Gastrocnemius medialis (tissue), 4 donors: ENCODE measurements at regions of chr15 and their contacts with region 1.

Region 1: GRCh38 chr15:50876989-50877360 is 31.5 kb upstream of the AP4E1 start:
- DNase-seq: peak; percentile 49 to 66
- ATAC-seq: peak; percentile 87 to 91
- H3K4me3 ChIP-seq: peak overlapping the region; percentile 44 to 53 (median 46)
- H3K27ac ChIP-seq: peak overlapping the region; percentile 60 to 74 (median 66)
- H3K4me1 ChIP-seq: peaks cover 0 to 4% of the 10 kb centered on the region in 2 donors
- H3K27me3 ChIP-seq: no peaks in the 10 kb centered on the region
- CTCF ChIP-seq: peak; percentile 90 to 97 (median 96)
- POLR2A ChIP-seq: no peak

Region 2: GRCh38 chr15:50675536-50676144 is 201.3 kb before region 1 on chr15:
- in situ Hi-C with region 1: loop called in 2 of 4 experiments (anchors 5 to 10 kb)
- intact Hi-C with region 1: loop called (anchors 1 kb)
- DNase-seq: no peak
- ATAC-seq: no peak
- H3K4me3 ChIP-seq: no peak overlapping the region
- H3K27ac ChIP-seq: no peak overlapping the region
- H3K4me1 ChIP-seq: peaks cover 10 to 19% of the 10 kb centered on the region in 2 donors
- H3K27me3 ChIP-seq: no peaks in the 10 kb centered on the region
- CTCF ChIP-seq: peak; percentile 66 to 84 (median 80)
- POLR2A ChIP-seq: no peak

Region 3: DNA sequence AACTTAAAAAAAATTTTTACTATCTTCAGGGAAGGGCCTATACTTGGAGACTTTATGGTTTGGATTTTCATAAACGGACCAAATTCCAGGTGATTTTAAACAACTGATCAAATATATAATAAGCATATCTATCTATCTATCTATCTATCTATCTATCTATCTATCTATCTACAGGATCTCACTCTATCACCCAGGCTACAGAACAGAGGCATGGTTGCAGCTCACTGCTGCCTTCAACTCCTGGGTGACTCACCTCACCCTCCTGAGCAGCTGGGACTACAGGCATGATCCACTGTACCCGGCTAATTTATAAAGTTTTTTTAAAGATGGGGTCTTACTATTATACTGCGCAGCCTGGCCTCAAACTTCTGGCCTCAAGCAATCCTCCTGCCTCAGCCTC is 118.2 kb before region 1 on chr15:
- in situ Hi-C with region 1: loop called in 2 of 4 experiments (anchors 5 kb)
- intact Hi-C with region 1: no loop called
- DNase-seq: no peak
- ATAC-seq: peak in 1 of 2 donors; percentile 55
- H3K4me3 ChIP-seq: no peak overlapping the region
- H3K27ac ChIP-seq: peak overlapping the region; percentile 60 to 98 (median 94)
- H3K4me1 ChIP-seq: peaks cover 51 to 70% of the 10 kb centered on the region in 2 donors
- H3K27me3 ChIP-seq: no peaks in the 10 kb centered on the region
- CTCF ChIP-seq: no peak
- POLR2A ChIP-seq: no peak

Region 4: GRCh38 chr15:50765195-50765973 is 111.6 kb before region 1 on chr15 and contains the start of gene SPPL2A:
- in situ Hi-C with region 1: loop called in 1 of 4 experiments (anchors 5 kb)
- intact Hi-C with region 1: loop called (anchors 5 kb)
- DNase-seq: peak; percentile 75 to 87
- ATAC-seq: peak; percentile 39 to 42
- H3K4me3 ChIP-seq: peak within 1 kb of the TSS; percentile 67 to 81 (median 74)
- H3K27ac ChIP-seq: peak within 1 kb of the TSS; percentile 93 to 98 (median 97)
- H3K4me1 ChIP-seq: peaks cover 37 to 46% of the 10 kb centered on the region in 2 donors
- H3K27me3 ChIP-seq: no peaks in the 10 kb centered on the region
- CTCF ChIP-seq: peak in 1 of 5 experiments; percentile 5
- POLR2A ChIP-seq: peak; percentile 96 to 97
- total RNA-seq, gene SPPL2A: 577 to 774 (median 620) TPM

Region 5: DNA sequence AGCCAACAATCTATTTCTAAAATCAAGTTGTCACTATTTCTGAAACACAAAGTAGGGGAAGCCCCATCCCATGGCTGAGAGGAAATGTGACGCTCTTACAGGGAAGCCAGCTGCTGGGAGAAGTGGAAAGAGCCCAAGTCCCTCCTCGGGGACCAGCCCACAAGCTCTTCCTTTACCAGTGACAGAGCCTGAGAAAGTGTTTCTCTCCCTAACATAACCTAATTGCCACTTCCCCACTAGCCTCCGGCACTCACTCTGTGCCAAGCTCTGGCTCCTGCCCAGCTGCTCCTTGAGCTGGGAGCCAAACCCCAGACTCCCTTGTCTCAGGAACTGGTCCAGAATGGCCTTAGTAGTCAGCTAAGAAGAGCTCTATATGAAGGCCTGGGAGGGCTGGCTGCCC is 174.8 kb after region 1 on chr15:
- in situ Hi-C with region 1: no loop called
- intact Hi-C with region 1: no loop called
- DNase-seq: peak; percentile 6 to 39
- ATAC-seq: peak; percentile 55 to 60
- H3K4me3 ChIP-seq: no peak overlapping the region
- H3K27ac ChIP-seq: peak overlapping the region in 1 of 4 donors; percentile 4
- H3K4me1 ChIP-seq: peaks cover 2 to 12% of the 10 kb centered on the region in 2 donors
- H3K27me3 ChIP-seq: no peaks in the 10 kb centered on the region
- CTCF ChIP-seq: no peak
- POLR2A ChIP-seq: no peak